ENCODE measurements at regions of chr2 and their contacts with region 1.

Region 1: DNA sequence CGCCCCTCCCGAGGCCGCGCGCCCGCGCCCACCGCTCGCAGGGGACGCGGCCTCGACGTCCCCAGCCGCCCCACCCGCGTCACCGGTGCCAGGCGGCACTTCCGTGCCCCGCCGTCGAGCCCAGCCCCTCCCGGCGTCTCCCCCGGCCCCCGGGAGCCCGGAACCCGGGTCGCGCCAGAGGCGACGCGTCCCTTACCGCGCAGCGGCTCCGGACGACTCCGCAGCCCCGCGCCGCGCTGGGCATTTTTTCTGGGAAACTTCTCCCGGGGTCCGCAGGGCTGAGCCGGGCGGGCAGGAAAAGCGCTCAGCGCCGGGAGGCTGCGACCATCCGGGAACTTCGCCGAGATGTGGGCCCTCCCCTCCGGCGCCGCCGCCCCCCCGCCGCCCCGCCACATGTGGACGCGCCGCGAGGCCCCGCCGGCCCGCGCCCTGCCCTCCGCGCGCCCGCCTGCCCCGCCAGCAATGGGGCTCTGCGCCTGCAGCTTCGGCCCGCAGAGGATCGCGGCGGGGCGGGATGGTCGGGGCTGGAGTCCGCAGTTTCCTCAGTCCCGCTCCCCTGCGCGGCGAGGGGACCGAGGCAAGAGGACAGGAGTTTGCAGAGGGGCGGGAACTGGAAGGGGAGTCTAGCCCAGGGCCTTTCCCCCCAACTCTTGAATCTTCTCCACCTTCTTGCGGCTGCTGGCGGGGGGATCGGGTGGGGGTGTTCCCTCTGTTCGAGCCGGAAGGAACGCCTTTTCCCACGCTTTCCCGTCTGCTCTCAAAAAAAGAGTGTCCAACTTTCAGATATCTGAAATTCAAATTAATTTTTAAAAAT is 81.5 kb downstream of the CHRNA1 start:
- DNase-seq: peak; percentile 62 to 88
- H3K4me3 ChIP-seq: peak overlapping the region; percentile 80
- H3K27ac ChIP-seq: peak overlapping the region; percentile 91 to 97
- H3K4me1 ChIP-seq: peaks cover 0 to 43% (median 25%) of the 10 kb centered on the region in 4 donors
- H3K27me3 ChIP-seq: no peaks in the 10 kb centered on the region
- CTCF ChIP-seq: no peak

Region 2: GRCh38 chr2:174487108-174487819 is 195.5 kb before region 1 on chr2:
- intact Hi-C with region 1: loop called (anchors 5 kb)
- DNase-seq: peak; percentile 99 to 100
- H3K4me3 ChIP-seq: peak overlapping the region; percentile 93
- H3K27ac ChIP-seq: peak overlapping the region; percentile 78 to 83
- H3K4me1 ChIP-seq: peaks cover 0 to 15% (median 1%) of the 10 kb centered on the region in 4 donors
- H3K27me3 ChIP-seq: no peaks in the 10 kb centered on the region
- CTCF ChIP-seq: no peak

Region 3: GRCh38 chr2:174615871-174616436 is 66.8 kb before region 1 on chr2:
- intact Hi-C with region 1: loop called (anchors 5 kb)
- DNase-seq: peak in 1 of 2 donors; percentile 54
- H3K4me3 ChIP-seq: no peak overlapping the region
- H3K27ac ChIP-seq: peak overlapping the region; percentile 80 to 84
- H3K4me1 ChIP-seq: peaks cover 6 to 77% (median 35%) of the 10 kb centered on the region in 4 donors
- H3K27me3 ChIP-seq: no peaks in the 10 kb centered on the region
- CTCF ChIP-seq: no peak

Measured in tibial artery (tissue), 4 donors.